CD8-positive, alpha-beta T cell (primary cell): ENCODE measurements at regions of chr11 and their contacts with region 1.

Region 1: GRCh38 chr11:46238967-46239800 is 38.3 kb upstream of the CREB3L1 start:
- DNase-seq: peak; percentile 58 to 90 (median 77)
- ATAC-seq: peak; percentile 73
- H3K4me3 ChIP-seq: peak overlapping the region; percentile 36 to 43
- H3K4me3 Mint-ChIP-seq: peak overlapping the region; percentile 66
- H3K27ac ChIP-seq: no peak overlapping the region
- H3K27ac Mint-ChIP-seq: no peak overlapping the region
- H3K4me1 ChIP-seq: peaks cover 28% of the 10 kb centered on the region
- H3K4me1 Mint-ChIP-seq: peaks cover 32% of the 10 kb centered on the region
- H3K27me3 ChIP-seq: peaks cover 11 to 19% of the 10 kb centered on the region in 2 experiments
- H3K27me3 Mint-ChIP-seq: peaks cover 33% of the 10 kb centered on the region
- CTCF ChIP-seq: peak; percentile 95

Region 2: DNA sequence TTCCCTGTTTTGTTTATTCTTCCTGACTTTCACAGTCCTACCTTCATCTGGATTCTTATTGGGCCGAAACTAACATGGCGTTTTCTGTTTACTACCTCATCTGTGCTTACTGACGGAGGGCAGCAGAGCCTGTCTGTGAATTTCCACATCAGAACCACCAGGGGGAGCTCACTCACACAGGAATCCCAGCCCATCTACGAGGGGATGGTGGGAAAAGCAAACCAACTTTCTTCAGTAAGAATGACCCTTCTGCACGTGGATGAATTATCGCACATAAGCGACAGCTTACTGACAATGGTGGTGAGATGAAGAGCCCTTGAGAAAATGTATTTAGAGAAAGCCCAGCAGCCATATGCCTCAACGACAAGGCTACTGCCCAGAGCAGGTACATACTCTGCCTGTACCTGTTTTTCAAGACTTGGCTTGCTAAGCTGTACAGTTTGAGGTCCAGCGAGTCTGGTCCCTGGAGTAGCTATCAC is 274.2 kb before region 1 on chr11:
- CTCF ChIA-PET with region 1: interaction called, 4 read pairs
- POLR2A ChIA-PET with region 1: no interaction called
- intact Hi-C with region 1: loop called in 1 of 2 experiments (anchors 10 kb)
- DNase-seq: peak; percentile 7 to 86 (median 54)
- ATAC-seq: peak; percentile 98
- H3K4me3 ChIP-seq: no peak overlapping the region
- H3K4me3 Mint-ChIP-seq: no peak overlapping the region
- H3K27ac ChIP-seq: peak overlapping the region in 1 of 2 experiments; percentile 12
- H3K27ac Mint-ChIP-seq: no peak overlapping the region
- H3K4me1 ChIP-seq: no peaks in the 10 kb centered on the region
- H3K4me1 Mint-ChIP-seq: no peaks in the 10 kb centered on the region
- H3K27me3 ChIP-seq: no peaks in the 10 kb centered on the region
- H3K27me3 Mint-ChIP-seq: no peaks in the 10 kb centered on the region
- CTCF ChIP-seq: peak; percentile 95

Region 3: GRCh38 chr11:46075168-46075567 is 164.0 kb before region 1 on chr11:
- CTCF ChIA-PET with region 1: no interaction called
- POLR2A ChIA-PET with region 1: no interaction called
- intact Hi-C with region 1: no loop called
- DNase-seq: no peak
- ATAC-seq: no peak
- H3K4me3 ChIP-seq: no peak overlapping the region
- H3K4me3 Mint-ChIP-seq: no peak overlapping the region
- H3K27ac ChIP-seq: no peak overlapping the region
- H3K27ac Mint-ChIP-seq: no peak overlapping the region
- H3K4me1 ChIP-seq: no peaks in the 10 kb centered on the region
- H3K4me1 Mint-ChIP-seq: peaks cover 4% of the 10 kb centered on the region
- H3K27me3 ChIP-seq: no peaks in the 10 kb centered on the region
- H3K27me3 Mint-ChIP-seq: no peaks in the 10 kb centered on the region
- CTCF ChIP-seq: no peak

Region 4: GRCh38 chr11:46249103-46249937 is 10.1 kb after region 1 on chr11:
- CTCF ChIA-PET with region 1: interaction called, 22 read pairs
- POLR2A ChIA-PET with region 1: no interaction called
- intact Hi-C with region 1: no loop called
- DNase-seq: no peak
- ATAC-seq: no peak
- H3K4me3 ChIP-seq: no peak overlapping the region
- H3K4me3 Mint-ChIP-seq: no peak overlapping the region
- H3K27ac ChIP-seq: no peak overlapping the region
- H3K27ac Mint-ChIP-seq: no peak overlapping the region
- H3K4me1 ChIP-seq: no peaks in the 10 kb centered on the region
- H3K4me1 Mint-ChIP-seq: no peaks in the 10 kb centered on the region
- H3K27me3 ChIP-seq: no peaks in the 10 kb centered on the region
- H3K27me3 Mint-ChIP-seq: peaks cover 9% of the 10 kb centered on the region
- CTCF ChIP-seq: no peak

Region 5: GRCh38 chr11:46315033-46315738 is 76.0 kb after region 1 on chr11:
- CTCF ChIA-PET with region 1: interaction called, 307 read pairs
- POLR2A ChIA-PET with region 1: interaction called, 4 read pairs
- intact Hi-C with region 1: loop called (anchors 1 kb)
- DNase-seq: peak; percentile 57 to 83 (median 77)
- ATAC-seq: peak; percentile 94
- H3K4me3 ChIP-seq: no peak overlapping the region
- H3K4me3 Mint-ChIP-seq: no peak overlapping the region
- H3K27ac ChIP-seq: no peak overlapping the region
- H3K27ac Mint-ChIP-seq: no peak overlapping the region
- H3K4me1 ChIP-seq: peaks cover 19% of the 10 kb centered on the region
- H3K4me1 Mint-ChIP-seq: peaks cover 17% of the 10 kb centered on the region
- H3K27me3 ChIP-seq: no peaks in the 10 kb centered on the region
- H3K27me3 Mint-ChIP-seq: no peaks in the 10 kb centered on the region
- CTCF ChIP-seq: peak; percentile 99

Region 6: DNA sequence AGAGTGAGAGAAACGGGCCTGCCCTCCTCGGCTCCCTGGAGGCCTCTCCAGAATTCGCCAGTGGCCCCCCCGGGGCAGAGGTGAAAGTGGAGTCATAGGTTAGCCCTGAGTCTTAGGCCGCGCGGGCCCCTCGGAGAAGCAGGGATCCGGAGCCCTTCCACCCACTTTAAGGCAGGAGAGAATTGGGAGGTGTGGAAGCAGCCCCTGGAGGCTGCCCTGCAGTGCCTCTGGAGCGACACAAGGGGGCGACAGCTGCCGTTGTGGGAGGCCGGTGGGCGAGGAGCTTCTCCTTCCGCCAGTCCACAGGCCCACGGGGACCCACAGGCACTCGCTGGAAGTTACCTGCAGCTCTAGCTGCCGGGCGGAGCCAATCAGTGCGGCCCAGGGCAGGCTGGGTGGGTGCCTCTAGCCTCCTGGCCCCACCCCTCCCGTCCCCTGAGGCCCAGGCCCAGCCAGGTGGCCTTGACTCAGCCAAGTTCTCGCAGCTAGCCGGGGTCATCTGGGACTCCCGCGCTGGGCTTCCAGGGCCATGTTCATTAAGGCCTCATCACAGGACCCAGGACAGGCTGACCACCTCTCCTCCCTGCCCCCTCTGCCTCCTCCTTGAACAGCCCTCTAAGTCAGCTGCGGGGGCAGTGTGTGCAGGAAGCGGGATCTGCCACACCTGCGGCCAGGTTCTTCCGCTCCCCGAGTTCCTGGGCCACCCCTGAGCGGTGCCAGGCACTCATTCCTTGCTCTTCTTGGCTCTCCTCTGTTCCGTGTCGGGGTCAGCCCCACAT is 113.1 kb after region 1 on chr11:
- CTCF ChIA-PET with region 1: interaction called, 45 read pairs
- POLR2A ChIA-PET with region 1: no interaction called
- intact Hi-C with region 1: no loop called
- DNase-seq: peak; percentile 62 to 93 (median 85)
- ATAC-seq: peak; percentile 65
- H3K4me3 ChIP-seq: peak overlapping the region; percentile 41 to 66
- H3K4me3 Mint-ChIP-seq: peak overlapping the region; percentile 84
- H3K27ac ChIP-seq: peak overlapping the region; percentile 27 to 64
- H3K27ac Mint-ChIP-seq: peak overlapping the region; percentile 92
- H3K4me1 ChIP-seq: peaks cover 79% of the 10 kb centered on the region
- H3K4me1 Mint-ChIP-seq: peaks cover 77% of the 10 kb centered on the region
- H3K27me3 ChIP-seq: no peaks in the 10 kb centered on the region
- H3K27me3 Mint-ChIP-seq: no peaks in the 10 kb centered on the region
- CTCF ChIP-seq: peak; percentile 93

Region 7: DNA sequence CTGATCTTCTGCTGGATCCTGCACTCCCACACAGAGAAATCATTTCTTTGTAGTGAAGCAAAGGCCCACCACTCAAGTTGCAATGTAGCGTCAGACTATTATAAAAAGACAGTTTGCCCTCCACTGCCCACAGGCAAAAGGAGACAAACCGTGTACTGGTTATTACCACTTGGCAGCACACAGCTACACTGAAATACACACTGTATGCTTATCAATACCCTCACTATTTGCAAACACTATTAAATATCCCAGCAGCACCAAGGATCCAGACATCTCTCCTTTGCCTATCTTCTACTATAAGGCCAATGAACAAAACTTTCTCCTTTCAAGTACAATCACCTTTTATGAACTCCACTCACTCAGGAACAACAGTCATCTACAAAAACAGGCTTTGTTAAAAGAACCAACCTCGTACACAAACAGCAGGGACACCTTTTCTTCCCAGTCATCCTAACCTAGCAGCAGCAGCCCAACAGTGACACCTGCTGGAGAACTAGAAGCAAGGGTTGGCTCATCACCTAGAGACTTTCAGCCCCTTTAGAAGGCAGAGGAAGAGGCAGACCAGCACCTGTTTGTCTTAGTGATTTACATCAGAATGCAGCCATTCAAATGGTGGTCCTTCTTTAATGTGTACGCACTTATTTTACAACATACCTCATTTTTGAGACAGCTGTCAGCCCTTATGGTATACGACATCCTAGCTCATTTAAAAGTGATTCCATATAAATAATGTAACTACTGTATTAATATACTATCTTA is 298.5 kb after region 1 on chr11:
- CTCF ChIA-PET with region 1: interaction called, 3 read pairs
- POLR2A ChIA-PET with region 1: no interaction called
- intact Hi-C with region 1: loop called (anchors 2 kb)
- DNase-seq: peak; percentile 19 to 78 (median 57)
- ATAC-seq: peak; percentile 91
- H3K4me3 ChIP-seq: no peak overlapping the region
- H3K4me3 Mint-ChIP-seq: no peak overlapping the region
- H3K27ac ChIP-seq: no peak overlapping the region
- H3K27ac Mint-ChIP-seq: peak overlapping the region; percentile 47
- H3K4me1 ChIP-seq: peaks cover 7% of the 10 kb centered on the region
- H3K4me1 Mint-ChIP-seq: peaks cover 35% of the 10 kb centered on the region
- H3K27me3 ChIP-seq: no peaks in the 10 kb centered on the region
- H3K27me3 Mint-ChIP-seq: no peaks in the 10 kb centered on the region
- CTCF ChIP-seq: peak; percentile 93